Ascending aorta (tissue), 2 donors: ENCODE measurements at regions of chr9 and their contacts with region 1.

Region 1: GRCh38 chr9:706606-707459 is 134.7 kb upstream of the DMRT1 start:
- DNase-seq: peak in 1 of 2 donors; percentile 91
- H3K4me3 ChIP-seq: peak overlapping the region; percentile 69 to 70
- H3K27ac ChIP-seq: peak overlapping the region; percentile 86 to 95
- H3K4me1 ChIP-seq: peaks cover 9 to 67% of the 10 kb centered on the region in 2 donors
- H3K27me3 ChIP-seq: no peaks in the 10 kb centered on the region
- CTCF ChIP-seq: no peak

Region 2: DNA sequence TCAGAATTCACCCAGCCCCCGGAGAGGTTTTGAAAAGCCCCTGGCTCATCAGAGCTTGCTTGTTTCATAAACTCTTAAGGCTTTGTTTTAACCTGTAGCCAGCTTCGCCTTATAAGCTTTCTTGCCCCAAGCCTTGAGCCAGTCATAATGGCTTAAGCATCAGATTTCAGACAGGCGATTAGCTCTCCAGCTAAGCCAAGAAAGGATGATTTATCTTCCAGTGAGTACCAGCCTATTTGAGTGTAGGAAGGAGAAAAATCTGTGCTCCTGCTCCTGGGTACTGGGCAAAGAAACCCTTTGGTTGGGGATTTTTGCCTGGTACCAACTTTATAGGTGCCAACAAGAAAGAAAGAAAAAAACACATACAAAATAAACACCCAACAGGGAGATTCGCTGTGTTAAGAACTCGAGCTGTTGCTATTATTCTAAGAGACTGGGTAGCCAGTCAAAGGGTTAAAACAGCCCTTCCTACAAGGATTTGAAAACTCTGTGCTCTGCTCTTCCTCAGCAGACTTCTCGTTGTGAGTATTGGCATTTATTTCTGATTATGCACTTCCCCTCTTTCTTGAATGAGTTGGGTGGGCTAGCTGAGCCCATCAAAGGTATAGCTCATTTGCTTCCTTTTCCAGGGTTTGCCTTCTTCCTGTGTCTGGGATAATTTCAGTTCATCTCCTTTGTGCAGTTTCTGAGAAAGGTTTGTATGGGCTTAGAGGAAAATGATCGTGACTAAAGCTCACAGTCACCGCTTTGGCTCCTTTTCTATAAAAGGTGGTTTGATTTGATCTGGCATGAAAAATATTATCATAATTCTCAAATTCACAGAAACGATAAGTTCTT is 22.6 kb before region 1 on chr9:
- intact Hi-C with region 1: loop called (anchors 2 kb)
- DNase-seq: no peak
- H3K4me3 ChIP-seq: peak overlapping the region; percentile 39 to 59
- H3K27ac ChIP-seq: peak overlapping the region; percentile 86 to 95
- H3K4me1 ChIP-seq: peaks cover 5 to 34% of the 10 kb centered on the region in 2 donors
- H3K27me3 ChIP-seq: no peaks in the 10 kb centered on the region
- CTCF ChIP-seq: no peak

Region 3: GRCh38 chr9:818958-819357 is 112.1 kb after region 1 on chr9:
- intact Hi-C with region 1: no loop called
- DNase-seq: no peak
- H3K4me3 ChIP-seq: no peak overlapping the region
- H3K27ac ChIP-seq: no peak overlapping the region
- H3K4me1 ChIP-seq: no peaks in the 10 kb centered on the region
- H3K27me3 ChIP-seq: no peaks in the 10 kb centered on the region
- CTCF ChIP-seq: no peak

Region 4: DNA sequence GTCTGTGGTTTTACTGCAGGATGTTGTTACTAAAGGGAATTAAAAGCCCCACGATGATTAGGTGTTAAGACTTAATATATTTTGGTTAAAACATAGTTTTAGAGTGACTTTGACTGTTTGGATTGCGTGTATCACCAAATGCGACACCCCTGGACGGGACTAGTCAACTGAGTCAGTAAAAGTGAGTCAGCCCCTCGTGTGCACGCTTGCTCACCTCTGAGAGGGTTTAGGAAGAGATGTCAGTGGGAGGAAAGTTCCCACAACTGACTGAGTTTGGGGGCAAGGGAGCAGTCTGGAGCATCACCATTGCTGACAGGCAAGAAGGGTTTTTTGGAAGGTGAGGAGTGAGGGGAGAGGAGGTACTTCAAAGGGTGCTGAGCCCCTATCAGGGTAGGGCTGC is 255.2 kb after region 1 on chr9:
- intact Hi-C with region 1: no loop called
- DNase-seq: no peak
- H3K4me3 ChIP-seq: no peak overlapping the region
- H3K27ac ChIP-seq: no peak overlapping the region
- H3K4me1 ChIP-seq: no peaks in the 10 kb centered on the region
- H3K27me3 ChIP-seq: no peaks in the 10 kb centered on the region
- CTCF ChIP-seq: no peak